A673 (cell line): ENCODE measurements at regions of chr2 and their contacts with region 1.

Region 1: DNA sequence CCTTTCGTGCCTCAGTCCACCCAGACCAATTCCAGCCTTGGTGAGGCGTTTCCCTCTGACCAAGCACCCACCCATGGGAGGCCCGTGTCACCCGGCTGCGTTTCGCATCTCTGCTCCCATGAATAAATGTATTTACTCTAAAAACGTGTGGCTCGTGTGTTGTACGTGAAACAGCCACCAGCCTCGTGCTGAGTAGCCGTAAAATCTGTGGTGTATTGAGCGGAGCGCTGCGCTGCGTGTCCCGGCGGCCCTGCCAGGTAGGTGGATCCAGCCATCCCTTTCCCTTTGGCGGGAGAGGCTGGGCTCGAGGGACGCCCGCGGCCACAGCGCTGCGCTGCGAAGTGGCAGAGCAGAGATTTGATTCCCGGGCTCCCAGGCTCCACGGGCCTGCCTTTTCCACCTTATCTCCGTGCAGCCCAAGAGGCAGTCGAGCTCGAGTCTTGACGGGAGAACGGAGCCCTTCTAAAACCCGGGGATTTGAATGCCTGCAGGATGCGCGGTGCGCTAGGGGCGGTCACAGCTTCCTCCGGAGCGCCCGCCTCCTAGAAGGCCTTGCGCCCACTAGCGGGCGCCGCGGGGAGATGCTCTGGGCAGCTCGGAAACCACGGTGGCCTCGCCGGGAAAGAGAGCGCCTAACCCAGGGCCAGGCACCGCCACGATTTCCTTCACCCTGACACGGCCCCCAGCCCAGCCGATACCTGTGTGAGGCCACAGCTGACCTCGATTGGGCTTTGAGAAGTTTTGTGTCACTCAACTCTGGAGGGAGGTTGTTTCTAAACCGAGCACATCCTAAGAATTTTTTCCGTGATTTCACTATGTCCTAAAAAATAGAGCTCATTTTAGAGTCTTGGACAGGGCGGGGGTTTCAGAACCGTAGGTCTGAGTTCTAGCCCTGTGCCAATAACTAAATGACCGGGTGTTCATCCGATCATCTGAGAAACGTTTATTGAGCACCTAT is 3.9 kb upstream of the PSMD1 start:
- DNase-seq: peak; percentile 92
- H3K4me3 ChIP-seq: peak overlapping the region; percentile 53
- H3K27ac ChIP-seq: no peak overlapping the region
- H3K4me1 ChIP-seq: peaks cover under 1% of the 10 kb centered on the region
- H3K27me3 ChIP-seq: peaks cover 3% of the 10 kb centered on the region
- CTCF ChIP-seq: peak; percentile 95

Region 2: GRCh38 chr2:230824406-230824978 is 228.3 kb before region 1 on chr2:
- CTCF ChIA-PET with region 1: interaction called, 23 read pairs
- POLR2A ChIA-PET with region 1: no interaction called
- intact Hi-C with region 1: loop called (anchors 5 kb)
- DNase-seq: peak; percentile 91
- H3K4me3 ChIP-seq: no peak overlapping the region
- H3K27ac ChIP-seq: no peak overlapping the region
- H3K4me1 ChIP-seq: no peaks in the 10 kb centered on the region
- H3K27me3 ChIP-seq: no peaks in the 10 kb centered on the region
- CTCF ChIP-seq: peak; percentile 74

Region 3: GRCh38 chr2:230902180-230902899 is 150.4 kb before region 1 on chr2:
- CTCF ChIA-PET with region 1: no interaction called
- POLR2A ChIA-PET with region 1: no interaction called
- intact Hi-C with region 1: loop called (anchors 2 kb)
- DNase-seq: peak; percentile 70
- H3K4me3 ChIP-seq: no peak overlapping the region
- H3K27ac ChIP-seq: no peak overlapping the region
- H3K4me1 ChIP-seq: no peaks in the 10 kb centered on the region
- H3K27me3 ChIP-seq: no peaks in the 10 kb centered on the region
- CTCF ChIP-seq: peak; percentile 87